Gastrocnemius medialis (tissue), 4 donors: ENCODE measurements at regions of chr11 and their contacts with region 1.

Region 1: DNA sequence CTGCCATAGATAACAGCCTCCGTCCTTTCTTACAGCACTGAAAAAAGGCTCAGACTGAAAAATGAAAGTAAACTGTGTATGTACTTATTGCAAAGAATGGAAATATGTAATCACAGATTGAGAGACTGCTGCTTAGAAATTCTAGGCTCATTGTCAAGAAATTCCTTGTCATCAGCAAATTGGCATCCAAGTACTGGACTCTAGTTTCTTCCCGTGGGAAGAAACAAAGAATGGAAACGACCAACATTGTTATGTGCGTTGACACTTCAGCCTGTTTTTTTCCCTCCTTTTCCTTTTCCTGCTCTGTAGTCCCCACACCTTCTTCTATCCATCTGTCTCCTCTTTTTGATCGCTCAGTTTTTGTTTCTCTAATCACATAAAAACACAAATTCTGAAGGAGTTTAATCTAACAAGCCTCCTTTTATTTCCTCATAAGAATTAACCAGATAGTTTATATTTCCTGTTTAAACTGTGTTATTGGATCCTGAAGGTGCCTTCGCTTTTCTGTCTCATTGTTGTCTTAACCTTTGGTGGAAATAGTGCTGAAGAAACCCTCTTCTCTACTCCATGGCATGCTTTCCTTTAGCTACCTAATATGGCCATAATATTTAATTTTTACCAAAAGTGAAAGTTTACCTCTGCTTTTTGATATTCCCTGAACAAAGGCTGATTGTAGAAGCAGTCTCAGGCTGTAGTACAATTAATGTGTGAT is 20.0 kb upstream of the CASP12 start:
- DNase-seq: no peak
- ATAC-seq: peak in 1 of 2 donors; percentile 39
- H3K4me3 ChIP-seq: peak overlapping the region; percentile 41 to 61 (median 48)
- H3K27ac ChIP-seq: peak overlapping the region; percentile 57 to 71 (median 62)
- H3K4me1 ChIP-seq: peaks cover 8 to 16% of the 10 kb centered on the region in 2 donors
- H3K27me3 ChIP-seq: no peaks in the 10 kb centered on the region
- CTCF ChIP-seq: no peak
- POLR2A ChIP-seq: no peak

Region 2: GRCh38 chr11:104968355-104968855 is 50.1 kb after region 1 on chr11 and contains the start of gene CASP4:
- in situ Hi-C with region 1: no loop called
- intact Hi-C with region 1: loop called (anchors 5 kb)
- DNase-seq: no peak
- ATAC-seq: peak; percentile 80 to 88
- H3K4me3 ChIP-seq: peak within 1 kb of the TSS; percentile 51 to 61 (median 58)
- H3K27ac ChIP-seq: peak within 1 kb of the TSS; percentile 62 to 80 (median 70)
- H3K4me1 ChIP-seq: peaks cover 12% of the 10 kb centered on the region in 2 donors
- H3K27me3 ChIP-seq: no peaks in the 10 kb centered on the region
- CTCF ChIP-seq: no peak
- POLR2A ChIP-seq: peak; percentile 50 to 61
- total RNA-seq, gene CASP4: 12.0 to 17.2 (median 14.4) TPM